ENCODE measurements at regions of chr11 and their contacts with region 1.

Region 1: GRCh38 chr11:77053217-77054015 is 13.4 kb upstream of the CAPN5 start:
- DNase-seq: no peak
- H3K4me3 ChIP-seq: no peak overlapping the region
- H3K27ac ChIP-seq: no peak overlapping the region
- H3K4me1 ChIP-seq: no peaks in the 10 kb centered on the region; a peak in 1 of 4 replicates
- H3K27me3 ChIP-seq: no peaks in the 10 kb centered on the region
- CTCF ChIP-seq: no peak
- EP300 ChIP-seq: no peak
- RAD21 ChIP-seq: no peak

Region 2: DNA sequence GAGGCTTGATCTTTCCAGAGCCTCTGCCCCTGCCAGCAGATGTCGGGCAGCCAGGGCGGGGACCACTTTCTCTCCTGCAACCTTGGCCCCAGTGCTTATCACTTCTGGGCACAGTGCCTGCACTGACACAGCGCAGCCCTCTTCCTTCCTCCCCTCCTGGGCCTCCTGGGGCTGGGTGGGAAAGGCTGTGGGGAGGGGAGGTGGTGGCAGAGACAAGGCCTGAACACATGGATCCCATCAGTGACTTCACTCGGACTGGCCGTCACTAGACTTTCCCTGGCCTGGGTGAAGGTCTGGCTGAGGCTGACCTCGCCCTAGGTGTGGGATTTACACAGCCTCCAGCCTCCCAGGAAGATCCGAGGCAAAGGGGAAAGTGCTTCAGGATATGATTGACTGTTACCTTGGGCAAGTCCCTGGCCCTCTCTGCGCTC is 451.0 kb before region 1 on chr11:
- CTCF ChIA-PET with region 1: no interaction called
- POLR2A ChIA-PET with region 1: no interaction called
- DNase-seq: peak; percentile 86
- H3K4me3 ChIP-seq: no peak overlapping the region
- H3K27ac ChIP-seq: peak overlapping the region in 1 of 2 experiments; percentile 89; a peak in 2 of 4 replicates
- H3K4me1 ChIP-seq: peaks cover 4 to 49% of the 10 kb centered on the region in 2 experiments; a peak in 2 of 4 replicates
- H3K27me3 ChIP-seq: no peaks in the 10 kb centered on the region
- CTCF ChIP-seq: no peak
- EP300 ChIP-seq: peak; percentile 37 to 70; a peak in 3 of 4 replicates
- RAD21 ChIP-seq: peak; percentile 19; the same call in 1 of the 2 replicates

Region 3: GRCh38 chr11:77009533-77010160 is 43.8 kb before region 1 on chr11:
- CTCF ChIA-PET with region 1: no interaction called
- POLR2A ChIA-PET with region 1: no interaction called
- DNase-seq: no peak
- H3K4me3 ChIP-seq: no peak overlapping the region
- H3K27ac ChIP-seq: no peak overlapping the region
- H3K4me1 ChIP-seq: no peaks in the 10 kb centered on the region
- H3K27me3 ChIP-seq: no peaks in the 10 kb centered on the region
- CTCF ChIP-seq: no peak
- EP300 ChIP-seq: no peak
- RAD21 ChIP-seq: no peak

Region 4: DNA sequence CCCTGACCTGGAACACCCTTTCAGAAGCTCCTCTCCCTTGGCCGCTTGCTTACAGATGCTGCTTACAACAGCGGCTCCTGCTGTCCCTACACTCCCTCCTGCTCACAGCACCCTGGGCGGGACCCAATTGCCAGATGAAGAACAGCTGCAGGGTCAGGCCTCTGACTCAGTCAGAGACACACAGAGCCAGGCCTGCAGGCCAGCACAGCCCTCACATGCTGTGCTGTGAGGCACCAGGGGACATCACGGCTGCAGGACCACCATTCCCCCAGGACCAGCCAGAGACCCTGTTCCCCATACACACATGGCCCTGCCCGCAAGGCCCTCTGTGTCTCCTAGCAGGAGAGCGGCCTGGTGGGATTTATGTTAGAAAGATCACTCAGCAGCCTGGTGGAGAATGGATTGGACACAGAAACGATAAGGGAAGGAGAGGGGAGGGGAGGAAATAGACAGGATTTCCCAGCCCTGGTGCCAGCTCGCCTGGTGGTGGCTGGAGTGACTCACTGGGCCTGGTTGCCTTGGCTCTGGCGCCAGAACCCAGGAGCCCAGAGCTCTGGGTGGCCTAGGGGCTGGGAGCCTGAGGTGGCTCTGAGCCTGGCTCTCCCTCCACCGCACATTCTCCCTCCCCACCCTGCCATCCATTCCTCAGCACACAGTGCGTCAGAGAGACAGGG is 20.0 kb after region 1 on chr11:
- CTCF ChIA-PET with region 1: interaction called, 28 read pairs
- POLR2A ChIA-PET with region 1: no interaction called
- DNase-seq: peak; percentile 89
- H3K4me3 ChIP-seq: peak overlapping the region in 1 of 2 experiments; percentile 20; a peak in 1 of 4 replicates
- H3K27ac ChIP-seq: peak overlapping the region; percentile 94 to 97
- H3K4me1 ChIP-seq: peaks cover 38 to 66% of the 10 kb centered on the region in 2 experiments; a peak in 3 of 4 replicates
- H3K27me3 ChIP-seq: no peaks in the 10 kb centered on the region
- CTCF ChIP-seq: peak; percentile 66
- EP300 ChIP-seq: peak in 1 of 2 experiments; percentile 4; a peak in 2 of 4 replicates
- RAD21 ChIP-seq: peak; percentile 59

Region 5: GRCh38 chr11:77151804-77152509 is 98.5 kb after region 1 on chr11:
- CTCF ChIA-PET with region 1: no interaction called
- POLR2A ChIA-PET with region 1: no interaction called
- DNase-seq: no peak
- H3K4me3 ChIP-seq: no peak overlapping the region
- H3K27ac ChIP-seq: no peak overlapping the region
- H3K4me1 ChIP-seq: peaks cover 0 to 13% of the 10 kb centered on the region in 2 experiments; a peak in 1 of 4 replicates
- H3K27me3 ChIP-seq: no peaks in the 10 kb centered on the region
- CTCF ChIP-seq: no peak
- EP300 ChIP-seq: no peak
- RAD21 ChIP-seq: no peak